ENCODE measurements at regions of chrX and their contacts with region 1.

Region 1: DNA sequence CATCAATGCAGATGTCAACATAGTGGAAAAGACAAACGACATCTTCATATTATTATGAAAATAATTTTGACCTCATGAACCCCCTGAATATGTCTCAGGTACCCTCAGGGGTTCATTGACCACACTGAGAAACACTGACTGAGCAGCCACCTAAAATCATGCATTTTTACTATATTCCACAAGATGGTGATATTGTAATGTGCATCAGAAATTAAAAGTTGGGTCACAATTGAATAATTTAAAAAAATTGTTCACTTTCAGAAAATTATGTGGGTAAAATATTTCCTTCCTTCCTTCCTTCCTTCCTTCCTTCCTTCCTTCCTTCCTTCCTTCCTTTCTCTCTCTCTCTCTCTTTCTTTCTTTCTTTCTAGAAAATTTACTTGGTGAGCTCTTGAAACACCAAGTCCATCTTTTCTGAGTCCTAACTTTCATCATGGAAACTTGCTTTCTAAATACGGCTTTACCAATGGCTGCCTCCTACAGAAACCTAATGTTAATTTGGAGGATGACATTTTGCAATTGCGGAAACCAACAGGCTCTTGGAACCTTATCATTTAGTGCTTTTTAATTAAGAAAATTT is 103.6 kb downstream of the RTL3 start:
- DNase-seq: peak; percentile 44
- ATAC-seq: peak; percentile 24; the same call in 1 of the 2 replicates
- H3K4me3 ChIP-seq: no peak overlapping the region
- H3K27ac ChIP-seq: no peak overlapping the region
- H3K4me1 ChIP-seq: no peaks in the 10 kb centered on the region
- H3K27me3 ChIP-seq: no peaks in the 10 kb centered on the region
- CTCF ChIP-seq: peak; percentile 59

Region 2: DNA sequence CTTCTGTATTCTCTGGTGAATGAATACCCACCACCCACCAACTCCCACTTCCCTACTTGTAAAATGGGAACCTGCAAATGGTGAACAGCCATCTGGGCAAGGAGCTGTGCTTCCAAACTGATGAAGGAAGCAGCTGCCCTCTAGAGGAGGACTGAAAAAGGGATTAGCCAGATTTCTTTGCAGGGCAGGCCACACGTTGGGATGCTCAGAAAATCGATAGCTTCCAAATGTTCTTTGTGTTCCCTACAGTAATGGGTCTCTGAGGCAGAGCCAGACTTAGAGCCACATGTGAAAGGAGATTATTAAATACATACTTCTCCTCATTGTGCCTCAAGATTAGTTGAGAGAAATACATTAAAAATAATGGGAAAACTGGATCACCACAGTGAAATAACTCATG is 152.8 kb after region 1 on chrX:
- CTCF ChIA-PET with region 1: no interaction called
- POLR2A ChIA-PET with region 1: no interaction called
- intact Hi-C with region 1: loop called (anchors 1 kb)
- DNase-seq: peak; percentile 63
- ATAC-seq: peak; percentile 76
- H3K4me3 ChIP-seq: no peak overlapping the region
- H3K27ac ChIP-seq: no peak overlapping the region
- H3K4me1 ChIP-seq: no peaks in the 10 kb centered on the region
- H3K27me3 ChIP-seq: no peaks in the 10 kb centered on the region
- CTCF ChIP-seq: peak; percentile 70

Region 3: DNA sequence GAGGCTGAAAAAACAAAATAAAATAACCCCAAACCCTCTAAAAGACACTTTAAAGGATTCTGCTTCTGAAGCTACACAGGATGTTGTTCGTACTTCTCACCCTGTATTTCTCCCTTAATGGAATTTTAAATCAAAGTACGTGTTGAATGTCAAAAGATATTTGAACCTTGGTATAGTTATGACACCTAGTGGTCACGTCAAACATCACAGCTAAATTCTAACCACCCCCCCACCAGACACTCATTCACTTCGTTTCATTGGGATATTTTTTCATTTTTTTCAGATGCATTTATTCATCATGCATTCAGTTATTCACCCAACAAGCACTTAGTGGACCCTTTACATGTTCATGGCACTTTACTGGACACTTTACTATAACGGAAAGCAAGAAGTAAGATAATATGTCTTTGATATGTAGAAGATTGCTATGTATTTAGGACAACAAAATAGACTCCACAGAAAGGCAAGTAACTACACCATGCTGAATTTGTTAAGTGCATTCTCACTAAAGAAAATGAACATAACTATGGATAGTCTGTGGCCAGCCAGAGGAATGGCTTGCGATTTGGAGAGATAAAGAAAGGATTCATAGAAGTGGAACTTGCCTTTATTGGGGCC is 526.5 kb after region 1 on chrX:
- CTCF ChIA-PET with region 1: no interaction called
- POLR2A ChIA-PET with region 1: no interaction called
- intact Hi-C with region 1: loop called (anchors 1 kb)
- DNase-seq: peak; percentile 64
- ATAC-seq: peak; percentile 60
- H3K4me3 ChIP-seq: no peak overlapping the region
- H3K27ac ChIP-seq: no peak overlapping the region
- H3K4me1 ChIP-seq: no peaks in the 10 kb centered on the region
- H3K27me3 ChIP-seq: no peaks in the 10 kb centered on the region; the same call in 1 of the 2 replicates
- CTCF ChIP-seq: peak; percentile 71